Activated naive CD4-positive, alpha-beta T cell treated with anti-CD3 and anti-CD28 coated beads, Interleukin-2, amount 10 ng/mL, durations not matched to agents 7 days and 5 days (primary cell): ENCODE measurements at regions of chr20 and their contacts with region 1.

Region 1: GRCh38 chr20:49541733-49542513 is 26.0 kb downstream of the PTGIS start:
- DNase-seq: peak; percentile 83
- H3K4me3 Mint-ChIP-seq: no peak overlapping the region
- H3K27ac Mint-ChIP-seq: peak overlapping the region; percentile 31
- H3K4me1 Mint-ChIP-seq: peaks cover 17% of the 10 kb centered on the region
- H3K27me3 Mint-ChIP-seq: peaks cover 54% of the 10 kb centered on the region

Region 2: GRCh38 chr20:49490702-49491110 is 51.2 kb before region 1 on chr20:
- CTCF ChIA-PET with region 1: no interaction called
- DNase-seq: no peak
- H3K4me3 Mint-ChIP-seq: no peak overlapping the region
- H3K27ac Mint-ChIP-seq: no peak overlapping the region
- H3K4me1 Mint-ChIP-seq: no peaks in the 10 kb centered on the region
- H3K27me3 Mint-ChIP-seq: peaks cover 35% of the 10 kb centered on the region

Region 3: DNA sequence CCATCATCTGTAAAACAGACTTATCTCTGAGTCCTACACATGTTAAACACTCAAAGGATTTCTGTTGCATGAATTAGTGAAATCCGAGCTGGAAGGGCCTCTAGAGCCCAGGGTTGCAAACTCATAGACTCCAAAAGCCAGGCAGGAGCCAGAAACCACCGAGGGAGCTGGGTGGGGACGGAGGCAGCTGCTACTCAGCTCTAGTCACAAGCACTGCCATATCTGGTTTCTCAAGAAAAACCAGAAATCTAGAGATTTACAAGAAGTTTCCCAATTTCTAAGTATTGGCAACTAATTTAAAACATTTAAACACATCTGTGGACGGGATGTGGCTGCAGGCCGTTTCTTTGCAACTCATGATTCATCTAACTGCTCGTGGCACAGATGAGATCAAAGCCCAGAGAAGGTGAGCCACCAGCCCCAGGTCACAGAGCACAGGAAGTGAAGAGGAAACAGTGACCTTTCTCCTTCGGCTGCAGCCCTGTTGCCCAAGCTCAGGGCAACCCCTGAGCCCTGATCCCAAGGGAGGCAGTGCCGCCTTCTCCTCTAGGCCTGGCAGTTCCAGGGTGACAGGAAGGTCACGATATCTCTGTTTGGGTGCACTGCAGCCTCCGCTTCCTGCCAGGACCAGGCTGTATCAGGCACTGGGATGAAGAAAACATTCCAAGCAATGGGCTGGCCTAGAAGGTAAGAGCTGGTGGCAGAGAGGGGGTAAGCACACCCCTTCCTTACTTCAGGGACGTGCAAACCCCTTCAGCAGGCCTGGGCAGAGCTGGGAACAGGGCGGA is 52.4 kb after region 1 on chr20:
- CTCF ChIA-PET with region 1: interaction called, 532 read pairs
- DNase-seq: peak; percentile 86
- H3K4me3 Mint-ChIP-seq: peak overlapping the region; percentile 76
- H3K27ac Mint-ChIP-seq: peak overlapping the region; percentile 98
- H3K4me1 Mint-ChIP-seq: peaks cover 90% of the 10 kb centered on the region
- H3K27me3 Mint-ChIP-seq: peaks cover 7% of the 10 kb centered on the region